A673 (cell line): ENCODE measurements at regions of chr16 and their contacts with region 1.

Region 1: GRCh38 chr16:68800257-68800875 is 43.0 kb upstream of the TANGO6 start:
- DNase-seq: peak; percentile 80
- H3K4me3 ChIP-seq: no peak overlapping the region
- H3K27ac ChIP-seq: no peak overlapping the region
- H3K4me1 ChIP-seq: no peaks in the 10 kb centered on the region
- H3K27me3 ChIP-seq: no peaks in the 10 kb centered on the region
- CTCF ChIP-seq: peak; percentile 80

Region 2: GRCh38 chr16:68704232-68704867 is 96.0 kb before region 1 on chr16:
- CTCF ChIA-PET with region 1: no interaction called
- POLR2A ChIA-PET with region 1: no interaction called
- intact Hi-C with region 1: loop called (anchors 1 kb)
- DNase-seq: peak; percentile 79
- H3K4me3 ChIP-seq: no peak overlapping the region
- H3K27ac ChIP-seq: no peak overlapping the region
- H3K4me1 ChIP-seq: no peaks in the 10 kb centered on the region
- H3K27me3 ChIP-seq: no peaks in the 10 kb centered on the region
- CTCF ChIP-seq: peak; percentile 82

Region 3: GRCh38 chr16:68719993-68720489 is 80.3 kb before region 1 on chr16:
- CTCF ChIA-PET with region 1: no interaction called
- POLR2A ChIA-PET with region 1: no interaction called
- intact Hi-C with region 1: no loop called
- DNase-seq: no peak
- H3K4me3 ChIP-seq: no peak overlapping the region
- H3K27ac ChIP-seq: no peak overlapping the region
- H3K4me1 ChIP-seq: no peaks in the 10 kb centered on the region
- H3K27me3 ChIP-seq: no peaks in the 10 kb centered on the region
- CTCF ChIP-seq: no peak